ENCODE measurements at regions of chr12 and their contacts with region 1.

Region 1: DNA sequence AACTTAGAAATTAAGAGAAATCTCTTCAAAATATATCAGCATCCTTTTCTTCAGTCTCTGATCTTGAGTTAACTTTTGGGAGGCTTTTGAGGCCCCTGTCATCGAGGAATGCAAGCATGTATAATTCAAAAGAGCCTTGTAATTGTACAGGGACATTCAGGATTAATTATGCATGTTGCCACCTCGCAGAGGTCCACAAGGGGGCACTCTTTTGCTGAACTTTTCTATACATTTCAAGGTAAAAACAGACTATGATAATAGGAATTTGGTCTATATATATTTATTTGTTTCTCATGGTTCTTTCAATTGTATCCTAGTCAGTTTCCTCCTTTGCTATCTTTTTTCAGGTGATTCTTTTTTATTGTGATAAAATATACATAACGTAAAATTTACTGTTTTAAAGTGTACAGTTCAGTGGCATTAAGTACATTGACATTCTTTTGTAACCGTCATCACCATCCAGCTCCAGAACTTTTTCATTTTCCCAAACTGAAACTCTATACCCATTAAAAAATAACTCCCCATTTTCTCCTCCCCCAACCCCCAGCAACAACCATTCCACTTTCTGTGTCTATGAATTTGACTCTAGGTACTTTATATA is 47.0 kb upstream of the SLC2A13 start:
- DNase-seq: peak; percentile 56
- H3K4me3 ChIP-seq: no peak overlapping the region
- H3K27ac ChIP-seq: no peak overlapping the region
- H3K4me1 ChIP-seq: no peaks in the 10 kb centered on the region
- H3K27me3 ChIP-seq: no peaks in the 10 kb centered on the region
- CTCF ChIP-seq: peak; percentile 75

Region 2: GRCh38 chr12:40224439-40225291 is 71.8 kb after region 1 on chr12 and contains the start of gene LRRK2:
- intact Hi-C with region 1: loop called (anchors 10 kb)
- DNase-seq: peak; percentile 60
- H3K4me3 ChIP-seq: peak within 1 kb of the TSS; percentile 50
- H3K27ac ChIP-seq: peak within 1 kb of the TSS; percentile 83
- H3K4me1 ChIP-seq: no peaks in the 10 kb centered on the region
- H3K27me3 ChIP-seq: no peaks in the 10 kb centered on the region
- CTCF ChIP-seq: no peak
- total RNA-seq, gene LRRK2: 1.7 to 4.1 TPM

Region 3: DNA sequence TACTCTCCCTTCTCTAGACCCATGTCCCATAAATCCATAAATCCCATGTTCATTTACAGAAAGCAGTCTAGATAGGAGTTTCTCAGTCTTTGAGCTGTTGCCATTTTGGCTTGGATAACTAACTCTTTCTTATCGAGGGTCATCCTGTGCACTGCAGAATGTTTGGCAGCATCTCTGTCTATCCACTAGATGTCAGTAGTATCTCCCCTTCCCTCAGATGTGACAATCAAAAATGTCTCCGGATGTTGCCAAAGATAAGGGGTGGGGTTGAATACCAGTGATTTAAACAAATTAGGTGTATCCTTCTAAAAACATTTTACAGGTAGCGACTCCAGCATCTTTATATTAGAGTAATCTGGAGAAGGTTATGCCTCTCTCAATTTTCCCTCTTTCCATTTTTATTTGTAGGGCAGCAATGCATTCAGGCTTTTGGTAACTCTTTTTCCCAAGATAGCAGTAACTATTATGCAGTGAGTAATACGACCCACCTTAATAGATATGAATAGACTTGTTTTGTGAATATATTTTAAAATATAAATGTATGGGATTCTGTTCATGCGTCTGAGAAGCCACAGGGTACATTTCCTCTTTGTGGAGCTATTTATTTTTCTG is 172.6 kb after region 1 on chr12:
- intact Hi-C with region 1: loop called (anchors 10 kb)
- DNase-seq: no peak
- H3K4me3 ChIP-seq: no peak overlapping the region
- H3K27ac ChIP-seq: no peak overlapping the region
- H3K4me1 ChIP-seq: no peaks in the 10 kb centered on the region
- H3K27me3 ChIP-seq: no peaks in the 10 kb centered on the region
- CTCF ChIP-seq: no peak